MCF 10A (cell line): ENCODE measurements at regions of chr2 and their contacts with region 1.

Region 1: GRCh38 chr2:171811245-171811628 is 82.8 kb downstream of the SLC25A12 start:
- DNase-seq: peak; percentile 46
- H3K4me3 Mint-ChIP-seq: no peak overlapping the region
- H3K27ac Mint-ChIP-seq: no peak overlapping the region
- H3K4me1 Mint-ChIP-seq: peaks cover 12% of the 10 kb centered on the region
- H3K27me3 Mint-ChIP-seq: no peaks in the 10 kb centered on the region
- CTCF ChIP-seq: peak; percentile 34

Region 2: DNA sequence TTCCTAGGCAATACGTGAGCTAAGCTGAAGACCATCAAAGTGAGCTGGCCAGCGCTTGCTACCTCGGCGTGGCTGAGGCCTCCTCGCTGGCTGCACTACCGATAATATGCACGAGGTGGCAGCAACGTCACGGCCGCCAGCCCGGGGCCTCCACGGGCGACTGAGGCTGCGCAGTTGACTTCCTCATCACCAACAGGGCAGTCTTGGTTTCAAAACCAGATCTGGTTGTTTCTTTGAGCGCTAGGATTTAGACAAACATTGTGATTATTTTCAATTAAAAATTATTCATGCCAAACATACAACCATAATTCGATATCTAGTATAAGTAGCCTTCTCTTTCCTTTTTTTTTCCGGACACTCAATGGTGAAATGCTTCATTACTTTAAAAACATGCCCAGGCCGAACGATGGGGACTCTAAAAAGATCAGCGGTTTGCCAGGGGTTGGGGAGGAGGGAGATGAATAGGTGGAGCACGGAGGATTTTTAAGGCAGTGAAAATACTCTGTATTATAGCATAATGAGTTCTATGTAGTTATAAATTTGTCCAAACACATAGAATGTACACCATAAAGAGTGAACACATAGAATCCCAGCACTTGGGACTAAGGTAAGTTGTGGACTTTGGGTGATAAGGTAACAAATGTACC is 237.0 kb before region 1 on chr2:
- CTCF ChIA-PET with region 1: interaction called, 4 read pairs
- POLR2A ChIA-PET with region 1: no interaction called
- intact Hi-C with region 1: loop called (anchors 5 kb)
- DNase-seq: peak; percentile 75
- H3K4me3 Mint-ChIP-seq: no peak overlapping the region
- H3K27ac Mint-ChIP-seq: no peak overlapping the region
- H3K4me1 Mint-ChIP-seq: no peaks in the 10 kb centered on the region
- H3K27me3 Mint-ChIP-seq: no peaks in the 10 kb centered on the region
- CTCF ChIP-seq: peak; percentile 97

Region 3: GRCh38 chr2:171852366-171852888 is 41.2 kb after region 1 on chr2:
- CTCF ChIA-PET with region 1: no interaction called
- POLR2A ChIA-PET with region 1: no interaction called
- intact Hi-C with region 1: no loop called
- DNase-seq: no peak
- H3K4me3 Mint-ChIP-seq: no peak overlapping the region
- H3K27ac Mint-ChIP-seq: no peak overlapping the region
- H3K4me1 Mint-ChIP-seq: peaks cover 5% of the 10 kb centered on the region
- H3K27me3 Mint-ChIP-seq: no peaks in the 10 kb centered on the region
- CTCF ChIP-seq: no peak

Region 4: DNA sequence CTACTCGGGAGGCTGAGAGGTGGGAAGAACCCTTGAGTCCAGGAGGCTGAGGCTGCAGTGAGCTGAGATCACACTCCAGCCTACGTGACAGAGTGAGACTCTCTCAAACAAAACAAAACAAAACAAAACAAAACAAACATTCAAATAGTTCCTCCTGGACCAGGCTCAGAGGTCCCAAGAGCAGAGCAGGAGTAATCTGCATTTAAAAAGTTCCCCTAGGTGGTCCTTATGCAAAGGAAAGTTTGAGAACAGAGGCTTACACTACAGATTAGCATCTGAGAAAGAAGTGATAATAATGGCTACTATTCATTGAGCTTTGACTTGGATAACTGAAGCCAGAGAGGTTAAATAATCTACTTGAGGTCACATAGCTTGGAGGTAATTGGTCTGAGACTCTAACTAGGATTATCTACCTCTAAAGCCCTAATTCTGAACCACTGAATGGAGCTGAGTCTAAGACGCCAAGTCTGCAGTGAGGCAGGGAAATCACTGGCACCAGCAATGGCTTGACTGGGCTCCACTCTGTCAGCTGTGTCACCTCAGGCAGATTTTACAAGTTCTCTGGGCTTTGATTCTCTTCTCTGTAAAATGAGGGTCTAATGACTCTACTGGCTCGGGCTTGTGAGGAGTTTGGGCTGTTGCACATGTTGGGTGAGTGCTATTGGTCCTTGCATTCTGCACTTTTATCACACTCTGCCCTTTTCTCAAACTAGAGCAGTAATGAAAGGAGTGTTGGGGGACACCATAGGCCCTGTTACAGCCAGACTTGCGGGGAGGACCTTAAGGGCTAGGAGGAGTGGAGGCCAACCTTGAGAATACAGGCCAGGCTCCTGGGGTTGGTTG is 320.7 kb after region 1 on chr2:
- CTCF ChIA-PET with region 1: interaction called, 6 read pairs
- POLR2A ChIA-PET with region 1: interaction called, 4 read pairs
- intact Hi-C with region 1: loop called (anchors 1 kb)
- DNase-seq: no peak
- H3K4me3 Mint-ChIP-seq: no peak overlapping the region
- H3K27ac Mint-ChIP-seq: peak overlapping the region; percentile 27
- H3K4me1 Mint-ChIP-seq: peaks cover 8% of the 10 kb centered on the region
- H3K27me3 Mint-ChIP-seq: no peaks in the 10 kb centered on the region
- CTCF ChIP-seq: no peak

Region 5: DNA sequence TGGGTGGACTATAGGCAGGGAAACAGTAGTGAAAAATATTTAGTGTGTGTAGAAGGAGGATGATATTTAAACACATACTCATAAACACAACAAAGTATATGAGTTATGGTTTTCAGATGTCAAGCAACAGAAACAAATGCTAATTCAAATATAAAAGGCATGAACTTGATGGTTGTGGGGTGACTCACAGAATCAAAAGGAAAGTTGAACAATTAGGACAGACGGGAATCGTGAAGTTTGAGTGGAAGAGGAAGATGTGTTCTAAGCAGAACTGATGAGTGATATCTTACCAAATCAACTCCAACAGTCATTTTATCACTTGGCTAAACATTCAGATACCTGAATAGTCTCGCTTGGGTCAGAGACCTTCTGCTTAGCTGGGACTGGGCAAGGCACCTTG is 562.5 kb after region 1 on chr2:
- CTCF ChIA-PET with region 1: no interaction called
- POLR2A ChIA-PET with region 1: no interaction called
- intact Hi-C with region 1: no loop called
- DNase-seq: no peak
- H3K4me3 Mint-ChIP-seq: no peak overlapping the region
- H3K27ac Mint-ChIP-seq: no peak overlapping the region
- H3K4me1 Mint-ChIP-seq: peaks cover 5% of the 10 kb centered on the region
- H3K27me3 Mint-ChIP-seq: no peaks in the 10 kb centered on the region
- CTCF ChIP-seq: no peak